ENCODE measurements at regions of chrX and their contacts with region 1.

Region 1: GRCh38 chrX:151825927-151826481 is 86.7 kb upstream of the MAGEA4 start:
- DNase-seq: peak; percentile 59
- H3K4me3 ChIP-seq: no peak overlapping the region
- H3K27ac ChIP-seq: no peak overlapping the region
- H3K4me1 ChIP-seq: peaks cover 24% of the 10 kb centered on the region
- H3K27me3 ChIP-seq: no peaks in the 10 kb centered on the region
- CTCF ChIP-seq: peak; percentile 15 to 52

Region 2: GRCh38 chrX:151776181-151776731 is 49.7 kb before region 1 on chrX:
- CTCF ChIA-PET with region 1: no interaction called
- dilution Hi-C with region 1: no loop called
- in situ Hi-C with region 1: no loop called
- intact Hi-C with region 1: loop called (anchors 5 kb)
- DNase-seq: no peak
- H3K4me3 ChIP-seq: no peak overlapping the region
- H3K27ac ChIP-seq: no peak overlapping the region
- H3K4me1 ChIP-seq: no peaks in the 10 kb centered on the region
- H3K27me3 ChIP-seq: no peaks in the 10 kb centered on the region
- CTCF ChIP-seq: no peak

Region 3: GRCh38 chrX:151871244-151871643 is 45.2 kb after region 1 on chrX:
- CTCF ChIA-PET with region 1: no interaction called
- dilution Hi-C with region 1: no loop called
- in situ Hi-C with region 1: no loop called
- intact Hi-C with region 1: loop called (anchors 5 kb)
- DNase-seq: peak; percentile 83
- H3K4me3 ChIP-seq: no peak overlapping the region
- H3K27ac ChIP-seq: peak overlapping the region; percentile 78
- H3K4me1 ChIP-seq: peaks cover 22% of the 10 kb centered on the region
- H3K27me3 ChIP-seq: no peaks in the 10 kb centered on the region
- CTCF ChIP-seq: no peak

Region 4: DNA sequence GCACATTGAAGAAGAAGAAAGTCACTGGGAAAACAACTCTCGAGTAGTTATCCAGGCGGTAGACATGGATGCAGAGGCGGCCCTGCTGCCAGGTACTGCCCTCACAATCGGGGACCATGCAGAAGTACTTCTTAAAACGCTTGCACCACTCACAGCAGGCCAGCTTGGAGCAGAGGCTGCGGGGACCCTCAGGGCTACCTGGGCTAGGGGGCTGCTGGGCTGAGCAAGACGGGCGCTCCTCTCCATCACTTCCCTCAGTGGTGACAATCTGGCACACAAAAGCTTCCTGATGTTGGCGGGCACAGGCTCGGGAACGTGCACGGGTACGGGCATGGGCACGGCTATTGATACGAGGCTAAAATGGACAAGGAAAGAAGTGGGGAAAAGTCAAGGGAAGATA is 128.7 kb after region 1 on chrX:
- CTCF ChIA-PET with region 1: no interaction called
- dilution Hi-C with region 1: no loop called
- in situ Hi-C with region 1: no loop called
- intact Hi-C with region 1: no loop called
- DNase-seq: no peak
- H3K4me3 ChIP-seq: no peak overlapping the region
- H3K27ac ChIP-seq: no peak overlapping the region
- H3K4me1 ChIP-seq: no peaks in the 10 kb centered on the region
- H3K27me3 ChIP-seq: no peaks in the 10 kb centered on the region
- CTCF ChIP-seq: no peak

Region 5: DNA sequence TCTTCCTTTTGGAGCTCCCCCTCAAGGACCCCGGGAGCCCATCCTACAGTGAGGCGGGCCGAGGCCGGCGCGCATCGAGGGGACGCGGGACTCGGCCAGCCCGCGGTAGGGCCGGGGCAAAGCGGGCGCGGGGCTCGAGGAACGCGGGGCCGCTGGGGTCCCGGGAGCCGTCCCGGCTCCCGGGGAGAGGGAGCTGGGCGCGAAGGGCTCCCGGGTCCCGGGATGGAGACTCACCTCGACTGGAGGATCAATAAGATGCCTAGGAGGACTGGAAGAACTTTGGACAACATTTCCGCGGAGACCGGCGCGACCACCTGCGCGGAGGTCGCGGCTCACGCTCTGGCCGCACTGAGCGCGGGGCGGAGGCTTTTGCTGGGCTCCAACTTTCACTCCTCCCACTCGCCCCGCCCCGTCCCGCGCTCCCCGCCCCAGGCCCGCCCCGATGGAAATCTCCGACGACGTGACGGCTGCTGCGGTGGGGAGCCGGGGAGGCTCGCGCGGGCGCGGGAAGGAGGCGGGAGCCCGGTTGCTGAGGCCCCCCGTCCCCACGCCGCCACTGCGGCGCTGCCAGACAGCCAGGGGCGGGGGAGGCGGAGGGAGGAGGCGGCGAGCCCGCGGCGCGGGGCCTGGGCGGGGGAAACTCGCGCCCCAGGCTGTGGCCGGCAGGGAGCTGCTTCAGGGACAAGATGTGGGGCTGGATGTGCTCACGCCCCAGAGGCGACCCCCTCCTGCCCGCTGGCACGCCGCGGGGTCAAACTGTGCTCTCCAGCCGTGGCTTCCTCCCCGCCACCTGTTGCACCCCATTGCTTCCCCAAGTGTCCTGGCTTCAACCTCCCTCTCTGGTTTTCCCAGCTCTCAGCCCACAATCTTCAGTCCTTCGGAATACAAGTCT is 148.6 kb after region 1 on chrX and contains the start of gene GABRE:
- CTCF ChIA-PET with region 1: interaction called, 4 read pairs
- dilution Hi-C with region 1: no loop called
- in situ Hi-C with region 1: no loop called
- intact Hi-C with region 1: loop called (anchors 1 kb)
- DNase-seq: no peak
- H3K4me3 ChIP-seq: peak within 1 kb of the TSS; percentile 44 to 62 (median 50)
- H3K27ac ChIP-seq: peak within 1 kb of the TSS; percentile 14
- H3K4me1 ChIP-seq: peaks cover 18% of the 10 kb centered on the region
- H3K27me3 ChIP-seq: no peaks in the 10 kb centered on the region
- CTCF ChIP-seq: no peak
- total RNA-seq, gene GABRE: 26.5 to 32.2 TPM

Measured in mammary epithelial cell (primary cell).